Vagina (tissue), 2 donors: ENCODE measurements at regions of chr6 and their contacts with region 1.

Region 1: GRCh38 chr6:5665173-5665572 is 341.6 kb downstream of the NRN1 start:
- DNase-seq: no peak
- H3K4me3 ChIP-seq: no peak overlapping the region
- H3K27ac ChIP-seq: no peak overlapping the region
- H3K4me1 ChIP-seq: no peaks in the 10 kb centered on the region
- H3K27me3 ChIP-seq: no peaks in the 10 kb centered on the region
- CTCF ChIP-seq: no peak
- POLR2A ChIP-seq: no peak

Region 2: DNA sequence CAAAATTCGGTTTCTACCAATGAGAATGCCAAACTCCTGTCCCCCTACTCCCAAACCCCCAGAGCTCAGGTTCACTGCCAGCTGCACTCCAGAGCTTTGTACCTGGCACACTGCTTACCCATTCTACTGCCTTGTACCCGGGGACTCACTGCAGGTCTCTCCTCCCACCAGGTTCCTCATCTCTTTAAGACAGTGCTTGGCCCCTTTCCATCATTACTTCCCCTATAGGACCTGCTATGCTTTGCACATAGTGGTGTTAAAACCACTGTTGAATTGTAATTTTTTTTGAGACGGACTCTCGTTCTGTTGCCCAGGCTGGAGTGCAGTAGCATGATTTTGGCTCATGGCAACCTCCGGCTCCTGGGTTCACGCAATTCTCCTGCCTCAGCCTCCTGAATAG is 430.3 kb before region 1 on chr6:
- intact Hi-C with region 1: loop called (anchors 5 kb)
- DNase-seq: no peak
- H3K4me3 ChIP-seq: no peak overlapping the region
- H3K27ac ChIP-seq: no peak overlapping the region
- H3K4me1 ChIP-seq: no peaks in the 10 kb centered on the region
- H3K27me3 ChIP-seq: no peaks in the 10 kb centered on the region
- CTCF ChIP-seq: no peak
- POLR2A ChIP-seq: no peak